ENCODE measurements at regions of chr14 and their contacts with region 1.

Region 1: DNA sequence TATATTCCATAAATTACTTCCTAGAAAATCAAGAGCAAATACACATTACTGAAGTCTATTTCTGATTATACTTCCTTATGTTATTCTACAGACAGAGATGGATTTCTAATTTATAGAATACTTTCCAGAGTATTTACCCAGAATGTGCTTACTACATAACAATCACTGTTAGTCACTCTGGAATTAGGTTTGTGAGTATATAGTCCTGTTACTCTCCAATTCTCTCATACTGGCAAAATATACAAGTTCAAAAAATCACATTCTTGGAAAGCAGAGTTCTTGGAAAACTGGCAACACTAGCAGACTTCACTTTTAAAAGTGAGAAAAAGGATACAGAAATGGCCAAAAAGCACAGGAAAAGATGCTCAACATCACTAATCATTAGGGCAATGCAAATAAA is 7.3 kb downstream of the PPP2R5E start:
- DNase-seq: no peak
- ATAC-seq: no peak
- H3K4me3 ChIP-seq: no peak overlapping the region
- H3K27ac ChIP-seq: no peak overlapping the region
- H3K4me1 ChIP-seq: peaks cover 0 to 2% (median 0%) of the 10 kb centered on the region in 3 donors
- H3K27me3 ChIP-seq: no peaks in the 10 kb centered on the region
- CTCF ChIP-seq: no peak

Region 2: DNA sequence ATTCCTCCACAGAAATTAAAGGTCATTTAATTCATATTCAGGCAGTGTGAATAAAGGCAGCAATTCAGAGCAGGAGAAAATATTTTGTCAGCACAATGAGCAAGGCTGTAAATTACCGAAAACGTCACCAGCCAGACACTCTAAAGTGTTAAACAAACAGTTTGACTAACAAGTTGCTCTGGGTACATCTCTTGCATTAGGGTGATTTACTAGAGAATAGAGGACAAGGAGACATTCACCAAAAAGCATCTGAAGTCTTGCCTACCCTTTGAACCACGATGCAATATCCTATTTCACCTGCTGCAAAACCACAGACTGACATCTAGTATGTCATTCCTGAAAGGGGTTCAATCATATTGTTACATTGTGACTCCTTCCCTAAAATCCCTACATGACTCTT is 190.1 kb before region 1 on chr14:
- intact Hi-C with region 1: no loop called
- DNase-seq: no peak
- ATAC-seq: peak in 2 of 4 donors; percentile 30 to 56
- H3K4me3 ChIP-seq: no peak overlapping the region
- H3K27ac ChIP-seq: no peak overlapping the region
- H3K4me1 ChIP-seq: no peaks in the 10 kb centered on the region
- H3K27me3 ChIP-seq: no peaks in the 10 kb centered on the region
- CTCF ChIP-seq: no peak

Region 3: DNA sequence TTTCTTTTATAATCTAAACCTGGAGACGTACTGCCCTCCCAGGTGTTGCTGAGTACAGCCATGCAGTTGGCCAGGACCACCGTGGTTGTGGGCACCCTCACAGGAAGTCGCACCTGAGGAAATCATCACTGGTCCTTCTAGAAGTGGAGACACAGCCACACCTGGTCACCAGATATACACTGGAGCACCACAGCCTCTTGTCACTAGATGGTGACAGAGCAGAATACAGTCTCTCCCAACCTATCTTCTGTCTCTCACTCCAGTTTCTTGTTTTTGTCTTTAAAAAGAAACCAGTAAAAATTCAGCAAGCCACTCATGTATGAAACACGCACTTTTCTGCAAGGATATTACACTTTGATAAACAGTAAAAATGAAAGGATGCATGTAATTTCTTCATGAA is 174.1 kb before region 1 on chr14:
- intact Hi-C with region 1: no loop called
- DNase-seq: no peak
- ATAC-seq: peak in 2 of 4 donors; percentile 48 to 54
- H3K4me3 ChIP-seq: no peak overlapping the region
- H3K27ac ChIP-seq: no peak overlapping the region
- H3K4me1 ChIP-seq: no peaks in the 10 kb centered on the region
- H3K27me3 ChIP-seq: no peaks in the 10 kb centered on the region
- CTCF ChIP-seq: no peak

Region 4: DNA sequence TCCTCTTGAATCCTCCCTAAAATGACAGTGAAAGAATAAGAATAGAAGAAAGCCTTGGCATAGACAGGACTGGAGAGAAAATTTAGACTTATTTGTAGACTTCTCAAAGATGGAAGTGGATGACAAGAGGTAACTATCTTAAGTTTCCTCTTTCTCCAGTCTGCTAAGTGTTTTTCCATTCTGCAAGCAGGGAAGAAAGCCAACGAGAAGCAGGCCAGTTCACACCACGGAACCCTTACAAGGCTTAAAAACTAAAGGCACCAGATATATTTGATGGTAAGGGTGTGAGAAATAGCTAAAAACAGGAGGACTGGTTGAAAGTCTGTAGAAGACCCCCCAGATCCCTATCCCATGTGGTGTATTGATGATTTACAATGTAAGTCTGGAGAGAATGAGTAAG is 134.3 kb before region 1 on chr14:
- intact Hi-C with region 1: loop called in 1 of 3 experiments (anchors 10 kb)
- DNase-seq: no peak
- ATAC-seq: no peak
- H3K4me3 ChIP-seq: no peak overlapping the region
- H3K27ac ChIP-seq: no peak overlapping the region
- H3K4me1 ChIP-seq: peaks cover 0 to 4% (median 0%) of the 10 kb centered on the region in 3 donors
- H3K27me3 ChIP-seq: no peaks in the 10 kb centered on the region
- CTCF ChIP-seq: no peak

Region 5: DNA sequence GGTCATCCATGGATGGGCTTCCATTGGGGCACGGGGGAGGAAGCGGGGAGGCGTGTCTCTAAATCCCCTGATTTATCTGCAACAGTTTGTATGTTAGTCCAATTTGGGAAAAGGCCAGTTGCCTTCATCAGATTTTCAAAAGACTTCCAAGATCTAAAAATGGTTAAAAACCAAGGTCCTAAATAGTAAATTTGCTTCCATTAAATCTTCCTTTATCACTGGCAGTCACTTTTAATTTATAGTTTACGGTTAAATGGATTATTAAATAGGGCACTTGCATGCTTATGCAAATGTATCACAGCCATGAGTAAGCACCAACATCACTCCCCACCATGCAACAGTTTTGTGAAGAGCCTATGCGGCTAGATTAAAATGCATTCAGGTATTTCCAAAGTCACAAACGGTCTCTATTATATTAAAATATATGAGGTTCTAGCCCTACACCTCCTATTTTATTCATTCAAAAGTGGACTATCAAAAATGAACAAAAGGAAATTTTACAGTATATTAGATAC is 109.0 kb before region 1 on chr14:
- intact Hi-C with region 1: loop called in 1 of 3 experiments (anchors 10 kb)
- DNase-seq: no peak
- ATAC-seq: no peak
- H3K4me3 ChIP-seq: no peak overlapping the region
- H3K27ac ChIP-seq: no peak overlapping the region
- H3K4me1 ChIP-seq: peaks cover 0 to 12% (median 4%) of the 10 kb centered on the region in 3 donors
- H3K27me3 ChIP-seq: no peaks in the 10 kb centered on the region
- CTCF ChIP-seq: no peak

Region 6: GRCh38 chr14:63650256-63650952 is 114.5 kb after region 1 on chr14:
- intact Hi-C with region 1: no loop called
- DNase-seq: peak in 2 of 6 donors; percentile 48 to 51
- ATAC-seq: peak; percentile 68 to 97 (median 92)
- H3K4me3 ChIP-seq: no peak overlapping the region
- H3K27ac ChIP-seq: peak overlapping the region; percentile 33 to 72 (median 54)
- H3K4me1 ChIP-seq: peaks cover 5 to 10% (median 8%) of the 10 kb centered on the region in 3 donors
- H3K27me3 ChIP-seq: no peaks in the 10 kb centered on the region
- CTCF ChIP-seq: no peak

Region 7: DNA sequence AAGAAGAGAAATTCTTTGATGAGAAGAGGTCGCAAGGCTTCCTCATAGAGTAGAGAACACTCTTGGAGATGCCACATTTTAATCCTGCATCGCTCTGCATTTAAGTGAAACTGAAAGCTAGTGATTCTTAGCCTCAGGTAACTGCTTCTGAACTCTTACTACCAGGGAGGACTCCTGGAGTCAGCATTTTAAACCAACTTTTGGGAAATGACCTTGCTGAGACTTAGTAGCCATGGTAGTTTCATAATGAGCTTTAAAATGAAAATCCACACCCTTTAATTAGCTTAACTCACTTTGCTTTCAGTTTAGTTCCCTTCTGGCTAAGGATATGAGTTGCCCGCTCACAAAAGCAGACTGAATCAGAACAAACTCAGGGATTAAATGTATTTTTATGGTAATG is 397.2 kb after region 1 on chr14:
- intact Hi-C with region 1: no loop called
- DNase-seq: no peak
- ATAC-seq: no peak
- H3K4me3 ChIP-seq: no peak overlapping the region
- H3K27ac ChIP-seq: no peak overlapping the region
- H3K4me1 ChIP-seq: peaks cover 0 to 7% (median 0%) of the 10 kb centered on the region in 3 donors
- H3K27me3 ChIP-seq: no peaks in the 10 kb centered on the region
- CTCF ChIP-seq: no peak

Measured in pancreas (tissue), 10 donors.